Right cardiac atrium (tissue), 5 donors: ENCODE measurements at regions of chr3 and their contacts with region 1.

Region 1: DNA sequence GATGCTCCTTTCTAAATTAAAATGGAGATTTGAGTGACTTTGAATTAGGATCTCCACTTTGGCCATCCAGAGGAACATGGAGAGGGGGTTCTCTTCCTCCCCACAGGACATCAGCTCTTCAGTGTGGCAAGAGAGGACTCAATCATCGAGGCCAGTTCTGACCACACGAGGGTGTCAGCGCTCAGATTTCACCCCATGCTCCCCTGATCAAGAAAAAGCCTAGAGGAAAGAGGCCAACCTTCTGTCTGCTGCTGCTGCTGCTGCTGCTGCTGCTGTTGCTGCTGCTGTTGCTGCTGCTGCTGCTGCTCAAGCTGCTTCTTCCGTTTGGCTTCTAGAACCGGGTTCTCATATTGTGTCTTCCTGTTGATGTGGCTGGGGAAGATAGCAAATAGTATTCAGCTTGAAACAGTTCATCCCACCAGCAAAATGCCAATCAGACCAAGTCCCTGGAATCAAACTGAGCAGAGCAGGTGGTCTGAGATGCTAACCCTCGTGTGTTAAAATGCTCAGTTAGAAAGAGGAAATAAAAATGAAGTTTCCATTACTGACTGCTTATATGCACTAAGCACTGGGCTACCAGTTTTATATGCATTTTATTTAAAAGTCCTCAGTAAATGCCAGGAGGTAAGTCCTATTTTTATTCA is 599.0 kb downstream of the MAGI1 start:
- DNase-seq: peak; percentile 44 to 78 (median 68)
- ATAC-seq: peak; percentile 80 to 84
- H3K4me3 ChIP-seq: no peak overlapping the region
- H3K27ac ChIP-seq: no peak overlapping the region
- H3K4me1 ChIP-seq: no peaks in the 10 kb centered on the region
- H3K27me3 ChIP-seq: no peaks in the 10 kb centered on the region

Region 2: DNA sequence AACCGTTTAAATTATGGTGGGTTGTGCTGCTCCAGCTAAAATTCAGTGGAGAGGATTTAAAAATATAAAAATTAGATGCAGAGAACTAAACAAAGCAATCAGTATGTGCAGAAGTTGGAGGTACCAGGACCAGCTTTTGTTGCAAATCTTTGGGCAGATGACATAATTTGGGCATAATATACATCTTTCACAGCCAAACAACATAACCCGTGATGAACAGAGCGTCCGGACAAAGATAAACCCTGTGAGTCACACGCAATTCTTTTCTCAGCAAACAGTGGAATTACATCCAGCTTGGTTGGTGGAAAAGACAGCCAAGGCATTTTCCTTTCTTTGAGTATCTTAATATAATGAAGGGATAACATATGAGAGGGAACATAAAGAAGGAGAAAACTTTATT is 332.6 kb before region 1 on chr3:
- intact Hi-C with region 1: no loop called
- DNase-seq: no peak
- ATAC-seq: peak; percentile 75 to 93
- H3K4me3 ChIP-seq: no peak overlapping the region
- H3K27ac ChIP-seq: no peak overlapping the region
- H3K4me1 ChIP-seq: no peaks in the 10 kb centered on the region
- H3K27me3 ChIP-seq: no peaks in the 10 kb centered on the region

Region 3: DNA sequence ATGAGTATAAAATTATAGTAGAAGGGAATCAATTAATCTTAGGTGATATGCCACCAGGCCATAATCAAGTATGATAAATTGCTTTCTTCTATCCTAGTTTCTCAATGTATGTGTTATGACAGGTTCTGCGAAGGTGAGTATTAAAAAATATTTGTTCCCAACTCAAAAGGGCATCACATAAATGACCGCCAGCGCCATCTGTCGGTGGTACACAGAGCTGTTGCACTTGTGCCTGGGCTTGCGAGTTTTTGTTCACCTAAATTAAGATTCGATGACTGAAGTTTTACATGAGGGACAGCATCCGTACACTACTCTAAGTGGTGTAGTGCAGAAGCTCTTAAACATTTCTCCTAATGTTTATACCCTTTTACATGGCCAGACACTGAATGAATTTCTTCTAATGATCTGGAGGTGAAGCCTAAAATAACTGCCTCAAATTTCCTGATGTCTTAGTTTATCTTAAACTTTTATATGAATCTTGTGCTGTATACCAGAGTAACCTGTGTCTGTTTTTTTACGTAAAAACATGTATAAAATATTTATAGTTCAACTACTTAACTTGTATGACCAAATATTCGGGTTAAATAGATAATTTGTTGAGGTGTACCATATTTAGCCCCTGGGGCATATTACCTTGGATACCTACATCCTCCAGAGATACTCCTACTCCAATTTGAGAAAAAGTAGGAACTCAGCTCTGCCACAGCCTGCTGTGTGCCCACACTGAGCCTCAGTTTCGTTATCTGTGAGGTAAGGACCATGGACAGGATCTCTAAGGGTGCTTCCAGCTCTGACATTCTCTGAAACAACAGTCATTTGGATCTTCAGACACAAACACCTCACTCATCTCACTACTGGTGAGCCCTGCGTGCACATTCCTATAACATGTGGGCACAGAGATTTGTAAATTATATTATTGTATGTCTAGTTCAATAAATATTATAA is 233.4 kb after region 1 on chr3:
- intact Hi-C with region 1: loop called in 2 of 4 experiments (anchors 5 to 10 kb)
- DNase-seq: peak; percentile 56 to 86 (median 81)
- ATAC-seq: peak in 1 of 2 donors; percentile 36
- H3K4me3 ChIP-seq: no peak overlapping the region
- H3K27ac ChIP-seq: no peak overlapping the region
- H3K4me1 ChIP-seq: no peaks in the 10 kb centered on the region
- H3K27me3 ChIP-seq: no peaks in the 10 kb centered on the region